B cell (primary cell): ENCODE measurements at regions of chr15 and their contacts with region 1.

Region 1: DNA sequence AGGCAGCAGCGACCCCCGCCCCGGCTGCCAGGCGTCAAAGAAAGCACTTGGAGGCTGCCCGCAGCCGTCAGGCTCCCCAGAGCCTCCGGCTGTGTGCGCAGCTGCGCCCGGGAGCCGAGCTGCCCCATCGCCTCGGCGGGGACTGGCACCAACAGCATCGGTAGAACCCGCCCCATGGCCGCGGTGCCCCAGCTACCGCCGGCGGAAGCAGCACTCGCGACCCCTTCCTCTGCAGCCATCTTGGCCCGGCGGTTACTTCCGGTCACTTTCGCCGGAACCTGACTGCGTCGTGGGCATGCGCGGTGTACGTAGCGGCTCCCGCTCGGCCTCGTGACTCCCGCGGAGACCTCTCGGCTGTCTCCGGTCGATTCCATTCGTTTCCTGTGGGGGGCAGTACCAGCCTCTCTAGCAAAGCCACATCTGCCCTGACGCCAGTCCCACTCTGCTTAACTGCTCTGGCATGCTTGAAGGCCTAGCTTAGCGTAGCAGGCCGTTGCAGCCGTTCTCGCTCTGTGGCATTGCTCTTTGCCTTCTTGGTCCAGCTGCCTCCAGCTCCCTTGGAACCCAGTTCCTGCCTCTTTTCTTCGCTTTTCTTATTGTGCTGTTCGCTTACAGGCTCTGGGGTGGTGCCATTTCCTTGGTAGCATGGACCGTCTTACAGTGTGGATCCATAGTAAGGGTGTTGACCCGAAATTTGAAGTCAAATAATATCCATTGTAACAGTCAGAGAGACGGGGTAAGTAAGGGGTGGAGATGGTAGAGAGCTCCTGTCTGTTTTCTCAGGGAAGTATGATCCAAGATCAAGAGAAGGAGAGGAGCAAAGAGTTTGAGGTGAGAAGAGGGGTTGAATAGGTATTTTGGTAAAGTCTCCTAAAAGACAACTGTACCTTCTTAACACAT is at the start of gene SPG11:
- DNase-seq: peak; percentile 99
- ATAC-seq: peak; percentile 83
- H3K4me3 ChIP-seq: peak within 1 kb of the TSS; percentile 81 to 99 (median 95)
- H3K4me3 Mint-ChIP-seq: peak within 1 kb of the TSS; percentile 99
- H3K27ac ChIP-seq: peak within 1 kb of the TSS; percentile 96 to 97
- H3K27ac Mint-ChIP-seq: peak within 1 kb of the TSS; percentile 93
- H3K4me1 ChIP-seq: peaks cover 51 to 58% of the 10 kb centered on the region in 2 donors
- H3K4me1 Mint-ChIP-seq: peaks cover 52% of the 10 kb centered on the region
- H3K27me3 ChIP-seq: no peaks in the 10 kb centered on the region
- H3K27me3 Mint-ChIP-seq: no peaks in the 10 kb centered on the region
- CTCF ChIP-seq: peak; percentile 86
- total RNA-seq, gene SPG11: 219 and 243 TPM in 2 replicates

Region 2: GRCh38 chr15:44584162-44584749 is 79.4 kb before region 1 on chr15:
- CTCF ChIA-PET with region 1: interaction called, 22 read pairs
- POLR2A ChIA-PET with region 1: interaction called, 3 read pairs
- intact Hi-C with region 1: loop called (anchors 2 kb)
- DNase-seq: peak; percentile 63
- ATAC-seq: peak; percentile 76
- H3K4me3 ChIP-seq: no peak overlapping the region
- H3K4me3 Mint-ChIP-seq: no peak overlapping the region
- H3K27ac ChIP-seq: peak overlapping the region in 1 of 2 donors; percentile 18
- H3K27ac Mint-ChIP-seq: no peak overlapping the region
- H3K4me1 ChIP-seq: no peaks in the 10 kb centered on the region
- H3K4me1 Mint-ChIP-seq: peaks cover 3% of the 10 kb centered on the region
- H3K27me3 ChIP-seq: no peaks in the 10 kb centered on the region
- H3K27me3 Mint-ChIP-seq: no peaks in the 10 kb centered on the region
- CTCF ChIP-seq: peak; percentile 56

Region 3: GRCh38 chr15:44682211-44682610 is 18.6 kb after region 1 on chr15:
- CTCF ChIA-PET with region 1: interaction called, 50 read pairs
- POLR2A ChIA-PET with region 1: interaction called, 51 read pairs
- intact Hi-C with region 1: loop called (anchors 1 kb)
- DNase-seq: no peak
- ATAC-seq: no peak
- H3K4me3 ChIP-seq: no peak overlapping the region
- H3K4me3 Mint-ChIP-seq: peak overlapping the region; percentile 78
- H3K27ac ChIP-seq: peak overlapping the region; percentile 79 to 80
- H3K27ac Mint-ChIP-seq: peak overlapping the region; percentile 96
- H3K4me1 ChIP-seq: peaks cover 47 to 48% of the 10 kb centered on the region in 2 donors
- H3K4me1 Mint-ChIP-seq: peaks cover 80% of the 10 kb centered on the region
- H3K27me3 ChIP-seq: no peaks in the 10 kb centered on the region
- H3K27me3 Mint-ChIP-seq: no peaks in the 10 kb centered on the region
- CTCF ChIP-seq: no peak

Region 4: DNA sequence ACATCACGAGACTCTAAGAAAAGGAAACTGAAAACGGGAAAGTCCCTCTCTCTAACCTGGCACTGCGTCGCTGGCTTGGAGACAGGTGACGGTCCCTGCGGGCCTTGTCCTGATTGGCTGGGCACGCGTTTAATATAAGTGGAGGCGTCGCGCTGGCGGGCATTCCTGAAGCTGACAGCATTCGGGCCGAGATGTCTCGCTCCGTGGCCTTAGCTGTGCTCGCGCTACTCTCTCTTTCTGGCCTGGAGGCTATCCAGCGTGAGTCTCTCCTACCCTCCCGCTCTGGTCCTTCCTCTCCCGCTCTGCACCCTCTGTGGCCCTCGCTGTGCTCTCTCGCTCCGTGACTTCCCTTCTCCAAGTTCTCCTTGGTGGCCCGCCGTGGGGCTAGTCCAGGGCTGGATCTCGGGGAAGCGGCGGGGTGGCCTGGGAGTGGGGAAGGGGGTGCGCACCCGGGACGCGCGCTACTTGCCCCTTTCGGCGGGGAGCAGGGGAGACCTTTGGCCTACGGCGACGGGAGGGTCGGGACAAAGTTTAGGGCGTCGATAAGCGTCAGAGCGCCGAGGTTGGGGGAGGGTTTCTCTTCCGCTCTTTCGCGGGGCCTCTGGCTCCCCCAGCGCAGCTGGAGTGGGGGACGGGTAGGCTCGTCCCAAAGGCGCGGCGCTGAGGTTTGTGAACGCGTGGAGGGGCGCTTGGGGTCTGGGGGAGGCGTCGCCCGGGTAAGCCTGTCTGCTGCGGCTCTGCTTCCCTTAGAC is 47.9 kb after region 1 on chr15 and contains the start of gene B2M:
- CTCF ChIA-PET with region 1: interaction called, 353 read pairs
- POLR2A ChIA-PET with region 1: interaction called, 819 read pairs
- intact Hi-C with region 1: loop called (anchors 1 kb)
- DNase-seq: peak; percentile 99
- ATAC-seq: peak; percentile 75
- H3K4me3 ChIP-seq: peak within 1 kb of the TSS; percentile 90 to 100 (median 100)
- H3K4me3 Mint-ChIP-seq: peak within 1 kb of the TSS; percentile 99
- H3K27ac ChIP-seq: peak within 1 kb of the TSS; percentile 99 to 100
- H3K27ac Mint-ChIP-seq: peak within 1 kb of the TSS; percentile 100
- H3K4me1 ChIP-seq: peaks cover 39 to 46% of the 10 kb centered on the region in 2 donors
- H3K4me1 Mint-ChIP-seq: peaks cover 44% of the 10 kb centered on the region
- H3K27me3 ChIP-seq: no peaks in the 10 kb centered on the region
- H3K27me3 Mint-ChIP-seq: no peaks in the 10 kb centered on the region
- CTCF ChIP-seq: no peak
- total RNA-seq, gene B2M: 3,928 and 3,981 TPM in 2 replicates

Region 5: DNA sequence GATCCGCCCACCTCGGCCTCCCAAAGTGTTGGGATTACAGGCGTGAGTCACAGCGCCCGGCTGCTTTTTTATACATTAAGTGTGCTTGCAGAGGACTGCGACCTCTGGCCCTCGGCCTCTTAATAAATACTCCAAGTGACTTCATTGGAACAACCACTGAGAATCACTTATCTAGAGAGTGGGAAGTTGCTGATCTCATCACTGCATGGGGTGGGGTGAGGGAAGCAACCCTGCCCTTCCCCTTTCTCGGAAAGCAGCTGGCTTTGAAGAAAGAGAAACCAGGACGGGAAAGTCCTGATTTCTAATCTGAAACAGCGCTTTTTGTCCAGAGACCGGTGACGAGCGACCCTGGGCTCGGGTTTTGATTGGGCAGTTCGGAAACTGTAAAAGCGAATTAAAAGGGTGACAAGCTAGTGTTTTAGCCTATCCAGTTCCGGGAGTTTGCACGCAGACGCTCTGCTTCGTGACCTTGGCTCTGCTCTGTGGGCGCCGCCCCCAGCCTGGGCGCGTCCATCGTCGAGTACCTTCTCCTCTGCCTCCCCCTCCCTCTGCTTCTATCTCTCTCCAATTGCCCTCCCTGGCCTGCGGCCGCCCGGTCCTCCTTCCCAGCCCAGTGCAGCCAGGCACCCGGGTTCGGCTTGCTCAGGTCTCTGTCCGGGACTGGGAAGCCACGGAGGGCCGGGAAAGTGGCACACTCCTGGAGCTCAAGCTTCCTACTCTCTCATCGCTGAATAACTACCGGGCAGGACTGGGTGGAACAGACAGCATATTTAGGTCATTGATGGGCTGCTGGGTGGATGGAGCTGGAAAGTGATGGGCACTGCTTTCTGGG is 65.1 kb after region 1 on chr15:
- CTCF ChIA-PET with region 1: interaction called, 257 read pairs
- POLR2A ChIA-PET with region 1: interaction called, 819 read pairs
- intact Hi-C with region 1: loop called (anchors 1 kb)
- DNase-seq: peak; percentile 98
- ATAC-seq: peak; percentile 77
- H3K4me3 ChIP-seq: peak overlapping the region; percentile 62 to 94 (median 88)
- H3K4me3 Mint-ChIP-seq: peak overlapping the region; percentile 99
- H3K27ac ChIP-seq: peak overlapping the region; percentile 94 to 95
- H3K27ac Mint-ChIP-seq: peak overlapping the region; percentile 99
- H3K4me1 ChIP-seq: peaks cover 61 to 70% of the 10 kb centered on the region in 2 donors
- H3K4me1 Mint-ChIP-seq: peaks cover 74% of the 10 kb centered on the region
- H3K27me3 ChIP-seq: no peaks in the 10 kb centered on the region
- H3K27me3 Mint-ChIP-seq: no peaks in the 10 kb centered on the region
- CTCF ChIP-seq: no peak

Region 6: GRCh38 chr15:45522328-45523160 is 858.9 kb after region 1 on chr15 and contains the start of gene SLC30A4:
- CTCF ChIA-PET with region 1: no interaction called
- POLR2A ChIA-PET with region 1: no interaction called
- intact Hi-C with region 1: loop called (anchors 5 kb)
- DNase-seq: peak; percentile 86
- ATAC-seq: peak; percentile 81
- H3K4me3 ChIP-seq: peak within 1 kb of the TSS; percentile 60 to 95 (median 73)
- H3K4me3 Mint-ChIP-seq: peak within 1 kb of the TSS; percentile 94
- H3K27ac ChIP-seq: peak within 1 kb of the TSS; percentile 26 to 64
- H3K27ac Mint-ChIP-seq: peak within 1 kb of the TSS; percentile 92
- H3K4me1 ChIP-seq: peaks cover 26 to 32% of the 10 kb centered on the region in 2 donors
- H3K4me1 Mint-ChIP-seq: peaks cover 43% of the 10 kb centered on the region
- H3K27me3 ChIP-seq: no peaks in the 10 kb centered on the region
- H3K27me3 Mint-ChIP-seq: no peaks in the 10 kb centered on the region
- CTCF ChIP-seq: peak; percentile 71
- total RNA-seq, gene SLC30A4: 9.1 and 11.0 TPM in 2 replicates